CD4-positive, alpha-beta T cell (primary cell): ENCODE measurements at regions of chr3 and their contacts with region 1.

Region 1: DNA sequence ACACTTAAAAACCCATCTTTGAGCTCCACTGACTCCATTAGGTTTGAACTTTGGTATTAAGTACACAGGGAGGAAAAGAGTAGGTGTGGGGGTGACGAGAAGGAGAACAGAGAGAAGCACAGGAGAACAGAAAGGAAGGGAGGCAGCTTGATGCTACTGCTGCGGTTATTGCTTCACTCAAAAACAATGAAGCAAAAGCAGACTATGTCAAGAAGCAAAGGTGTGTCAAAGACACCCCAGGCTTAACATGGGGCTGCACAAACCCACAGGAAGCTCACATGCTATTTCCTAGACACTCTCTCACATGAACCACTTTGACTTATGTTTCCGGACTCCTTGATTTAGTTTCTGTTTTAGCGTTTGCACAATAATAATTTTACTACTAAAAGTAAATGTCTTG is 961.0 kb upstream of the CFAP20DC start:
- DNase-seq: peak; percentile 37 to 92 (median 52)
- ATAC-seq: peak; percentile 94
- H3K4me3 ChIP-seq: peak overlapping the region; percentile 29
- H3K4me3 Mint-ChIP-seq: peak overlapping the region; percentile 86
- H3K27ac ChIP-seq: peak overlapping the region; percentile 65 to 86
- H3K27ac Mint-ChIP-seq: peak overlapping the region; percentile 94
- H3K4me1 ChIP-seq: peaks cover 65% of the 10 kb centered on the region
- H3K4me1 Mint-ChIP-seq: peaks cover 93% of the 10 kb centered on the region
- H3K27me3 ChIP-seq: no peaks in the 10 kb centered on the region
- H3K27me3 Mint-ChIP-seq: no peaks in the 10 kb centered on the region
- CTCF ChIP-seq: no peak

Region 2: GRCh38 chr3:59772416-59773408 is 238.1 kb before region 1 on chr3:
- CTCF ChIA-PET with region 1: no interaction called
- POLR2A ChIA-PET with region 1: interaction called, 10 read pairs
- intact Hi-C with region 1: no loop called
- DNase-seq: peak; percentile 9 to 75 (median 34)
- ATAC-seq: peak; percentile 85
- H3K4me3 ChIP-seq: peak overlapping the region; percentile 20
- H3K4me3 Mint-ChIP-seq: peak overlapping the region; percentile 63
- H3K27ac ChIP-seq: no peak overlapping the region
- H3K27ac Mint-ChIP-seq: peak overlapping the region; percentile 47
- H3K4me1 ChIP-seq: peaks cover 27% of the 10 kb centered on the region
- H3K4me1 Mint-ChIP-seq: peaks cover 69% of the 10 kb centered on the region
- H3K27me3 ChIP-seq: no peaks in the 10 kb centered on the region
- H3K27me3 Mint-ChIP-seq: no peaks in the 10 kb centered on the region
- CTCF ChIP-seq: no peak

Region 3: GRCh38 chr3:59990915-59991314 is 19.9 kb before region 1 on chr3:
- CTCF ChIA-PET with region 1: interaction called, 3 read pairs
- POLR2A ChIA-PET with region 1: interaction called, 24 read pairs
- intact Hi-C with region 1: loop called in 1 of 2 experiments (anchors 2 kb)
- DNase-seq: no peak
- ATAC-seq: no peak
- H3K4me3 ChIP-seq: no peak overlapping the region
- H3K4me3 Mint-ChIP-seq: no peak overlapping the region
- H3K27ac ChIP-seq: no peak overlapping the region
- H3K27ac Mint-ChIP-seq: peak overlapping the region; percentile 85
- H3K4me1 ChIP-seq: peaks cover 12% of the 10 kb centered on the region
- H3K4me1 Mint-ChIP-seq: peaks cover 90% of the 10 kb centered on the region
- H3K27me3 ChIP-seq: no peaks in the 10 kb centered on the region
- H3K27me3 Mint-ChIP-seq: no peaks in the 10 kb centered on the region
- CTCF ChIP-seq: no peak

Region 4: GRCh38 chr3:60025096-60026050 is 14.6 kb after region 1 on chr3:
- CTCF ChIA-PET with region 1: interaction called, 3 read pairs
- POLR2A ChIA-PET with region 1: interaction called, 66 read pairs
- intact Hi-C with region 1: no loop called
- DNase-seq: no peak
- ATAC-seq: peak; percentile 24
- H3K4me3 ChIP-seq: no peak overlapping the region
- H3K4me3 Mint-ChIP-seq: peak overlapping the region; percentile 13
- H3K27ac ChIP-seq: no peak overlapping the region
- H3K27ac Mint-ChIP-seq: peak overlapping the region; percentile 77
- H3K4me1 ChIP-seq: no peaks in the 10 kb centered on the region
- H3K4me1 Mint-ChIP-seq: peaks cover 94% of the 10 kb centered on the region
- H3K27me3 ChIP-seq: no peaks in the 10 kb centered on the region
- H3K27me3 Mint-ChIP-seq: no peaks in the 10 kb centered on the region
- CTCF ChIP-seq: no peak

Region 5: GRCh38 chr3:60053526-60054265 is 42.9 kb after region 1 on chr3:
- CTCF ChIA-PET with region 1: interaction called, 5 read pairs
- POLR2A ChIA-PET with region 1: interaction called, 16 read pairs
- intact Hi-C with region 1: loop called (anchors 1 to 5 kb)
- DNase-seq: peak in 6 of 14 experiments; percentile 20 to 70 (median 34)
- ATAC-seq: no peak
- H3K4me3 ChIP-seq: no peak overlapping the region
- H3K4me3 Mint-ChIP-seq: peak overlapping the region; percentile 50
- H3K27ac ChIP-seq: no peak overlapping the region
- H3K27ac Mint-ChIP-seq: peak overlapping the region; percentile 91
- H3K4me1 ChIP-seq: peaks cover 14% of the 10 kb centered on the region
- H3K4me1 Mint-ChIP-seq: peaks cover 88% of the 10 kb centered on the region
- H3K27me3 ChIP-seq: no peaks in the 10 kb centered on the region
- H3K27me3 Mint-ChIP-seq: no peaks in the 10 kb centered on the region
- CTCF ChIP-seq: no peak

Region 6: DNA sequence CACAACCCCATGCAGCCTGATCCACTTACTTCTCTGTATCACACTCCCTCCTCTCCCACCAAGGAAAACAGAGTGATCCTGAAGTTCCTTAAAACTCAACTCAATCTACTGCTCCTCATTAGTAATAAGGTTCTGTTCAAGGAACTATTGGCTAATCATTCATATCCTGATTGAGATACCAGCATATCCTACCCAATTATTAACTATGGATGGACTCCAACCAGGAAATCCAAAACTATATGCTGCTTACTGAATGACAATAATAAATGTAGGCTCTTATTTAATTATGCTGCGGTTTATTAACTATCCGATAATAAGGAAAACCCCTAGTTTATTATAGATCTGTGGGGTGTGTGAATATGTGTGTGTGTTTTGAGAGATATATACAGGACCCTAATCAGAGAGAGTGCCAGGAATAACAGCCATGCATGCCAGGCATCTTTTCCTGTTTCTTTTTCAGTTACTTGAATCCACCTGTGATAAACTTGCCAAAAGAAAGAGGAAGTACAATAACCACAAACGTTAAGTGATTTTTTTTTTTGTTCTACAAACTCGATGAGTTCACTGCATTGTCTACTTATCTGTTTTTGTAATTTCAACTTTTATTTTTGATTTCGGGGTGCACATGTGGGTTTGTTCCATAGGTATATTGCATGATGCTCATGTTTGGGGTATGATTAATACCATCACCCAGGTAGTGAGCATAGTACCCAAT is 70.8 kb after region 1 on chr3:
- CTCF ChIA-PET with region 1: interaction called, 9 read pairs
- POLR2A ChIA-PET with region 1: interaction called, 57 read pairs
- intact Hi-C with region 1: loop called in 1 of 2 experiments (anchors 2 kb)
- DNase-seq: peak in 3 of 14 experiments; percentile 46 to 66 (median 47)
- ATAC-seq: peak; percentile 43
- H3K4me3 ChIP-seq: peak overlapping the region; percentile 54
- H3K4me3 Mint-ChIP-seq: peak overlapping the region; percentile 87
- H3K27ac ChIP-seq: peak overlapping the region; percentile 6 to 61
- H3K27ac Mint-ChIP-seq: peak overlapping the region; percentile 88
- H3K4me1 ChIP-seq: peaks cover 13% of the 10 kb centered on the region
- H3K4me1 Mint-ChIP-seq: peaks cover 54% of the 10 kb centered on the region
- H3K27me3 ChIP-seq: no peaks in the 10 kb centered on the region
- H3K27me3 Mint-ChIP-seq: no peaks in the 10 kb centered on the region
- CTCF ChIP-seq: no peak